ENCODE measurements at regions of chr7 and their contacts with region 1.

Region 1: DNA sequence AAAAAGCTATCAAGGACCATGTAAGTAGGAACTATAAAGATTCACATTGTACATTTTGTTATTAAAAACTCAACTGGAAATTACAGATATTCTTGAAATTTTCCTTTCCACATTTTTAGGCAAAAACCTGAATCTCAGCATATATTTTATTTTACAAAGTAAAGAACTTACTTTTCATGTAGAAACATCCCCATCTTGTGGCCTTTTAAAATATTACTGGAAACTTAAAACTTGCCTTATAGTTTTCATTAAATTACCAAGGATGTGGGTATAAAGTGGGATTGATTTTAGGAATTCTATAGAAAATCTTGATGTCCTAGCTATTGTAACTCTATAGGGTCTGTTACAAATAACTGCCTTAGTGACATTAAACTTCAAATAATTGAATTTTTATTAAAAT is 10.6 kb downstream of the DBF4 start:
- DNase-seq: no peak
- H3K4me3 ChIP-seq: no peak overlapping the region
- H3K27ac ChIP-seq: no peak overlapping the region
- H3K27me3 ChIP-seq: no peaks in the 10 kb centered on the region
- CTCF ChIP-seq: peak; percentile 42 to 81 (median 60)

Region 2: DNA sequence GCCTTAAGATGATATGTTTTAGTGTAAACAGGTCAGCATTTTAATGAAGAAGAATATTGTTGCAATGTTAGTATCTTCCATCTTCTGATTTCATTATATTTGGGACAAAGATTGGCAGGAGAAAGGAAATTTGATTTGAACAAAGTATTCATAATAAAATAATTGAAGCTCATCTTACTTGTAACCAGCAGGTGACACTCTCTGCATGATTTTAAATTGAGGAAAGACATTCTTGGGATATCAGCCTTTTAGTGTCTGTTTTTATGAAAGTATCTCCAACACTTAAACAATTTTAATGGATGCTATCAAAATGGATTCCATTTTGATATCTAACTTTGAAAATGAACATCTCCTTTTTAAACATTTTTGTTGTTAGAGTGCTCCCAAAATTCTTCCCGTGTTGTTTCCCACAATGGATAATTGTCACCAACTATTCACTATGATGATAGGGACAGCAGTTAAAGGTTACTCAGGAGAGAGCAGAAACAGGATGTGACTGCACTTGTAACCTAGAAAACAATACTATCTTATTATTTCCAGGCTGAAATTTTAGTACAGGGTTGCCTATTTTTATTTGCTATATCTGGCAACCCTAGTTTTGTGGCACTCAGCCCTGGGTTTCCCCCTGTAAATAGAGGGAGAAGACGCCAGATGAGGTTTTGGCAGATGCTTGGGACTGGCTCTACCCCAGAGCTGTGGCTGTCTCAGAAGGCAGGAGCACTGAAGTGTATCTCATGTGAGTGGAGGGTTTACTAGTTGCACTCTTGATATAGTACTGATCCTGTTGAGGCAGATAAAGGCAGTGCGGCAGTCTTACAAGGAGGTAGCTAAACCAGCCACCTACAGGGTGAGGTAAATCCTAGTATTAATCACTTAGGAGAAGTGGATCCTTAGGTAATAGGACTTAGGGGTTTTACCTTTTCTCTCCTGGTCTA is 380.4 kb before region 1 on chr7:
- intact Hi-C with region 1: loop called in 1 of 2 experiments (anchors 5 kb)
- DNase-seq: no peak
- H3K4me3 ChIP-seq: no peak overlapping the region
- H3K27ac ChIP-seq: no peak overlapping the region
- H3K27me3 ChIP-seq: peaks cover 0 to 3% (median 0%) of the 10 kb centered on the region in 45 donors
- CTCF ChIP-seq: peak in 55 of 56 donors; percentile 21 to 71 (median 51)

Region 3: GRCh38 chr7:87784423-87784822 is 102.5 kb before region 1 on chr7:
- intact Hi-C with region 1: no loop called
- DNase-seq: no peak
- H3K4me3 ChIP-seq: no peak overlapping the region
- H3K27ac ChIP-seq: no peak overlapping the region
- H3K27me3 ChIP-seq: no peaks in the 10 kb centered on the region
- CTCF ChIP-seq: no peak

Region 4: GRCh38 chr7:87797798-87798403 is 89.0 kb before region 1 on chr7:
- intact Hi-C with region 1: loop called in 1 of 2 experiments (anchors 5 kb)
- DNase-seq: no peak
- H3K4me3 ChIP-seq: no peak overlapping the region
- H3K27ac ChIP-seq: no peak overlapping the region
- H3K27me3 ChIP-seq: no peaks in the 10 kb centered on the region
- CTCF ChIP-seq: peak in 55 of 56 donors; percentile 21 to 80 (median 63)

Measured in dorsolateral prefrontal cortex (tissue), 120 donors.